Caco-2 (cell line): ENCODE measurements at regions of chr2 and their contacts with region 1.

Region 1: GRCh38 chr2:200713003-200713703 is 98.6 kb upstream of the BZW1 start:
- DNase-seq: peak; percentile 88 to 92
- H3K4me3 ChIP-seq: peak overlapping the region; percentile 18
- H3K4me3 Mint-ChIP-seq: peak overlapping the region; percentile 70
- H3K27ac Mint-ChIP-seq: peak overlapping the region; percentile 95
- H3K4me1 ChIP-seq: peaks cover 8% of the 10 kb centered on the region; the same call in 1 of the 2 replicates
- H3K4me1 Mint-ChIP-seq: no peaks in the 10 kb centered on the region
- H3K27me3 ChIP-seq: no peaks in the 10 kb centered on the region
- H3K27me3 Mint-ChIP-seq: no peaks in the 10 kb centered on the region
- CTCF ChIP-seq: peak; percentile 84 to 86

Region 2: GRCh38 chr2:200747668-200748618 is 34.8 kb after region 1 on chr2:
- CTCF ChIA-PET with region 1: interaction called, 7 read pairs
- POLR2A ChIA-PET with region 1: interaction called, 9 read pairs
- intact Hi-C with region 1: loop called (anchors 5 kb)
- DNase-seq: peak; percentile 77 to 87
- H3K4me3 ChIP-seq: no peak overlapping the region
- H3K4me3 Mint-ChIP-seq: peak overlapping the region; percentile 63
- H3K27ac Mint-ChIP-seq: peak overlapping the region; percentile 90
- H3K4me1 ChIP-seq: peaks cover 50% of the 10 kb centered on the region
- H3K4me1 Mint-ChIP-seq: peaks cover 32% of the 10 kb centered on the region
- H3K27me3 ChIP-seq: no peaks in the 10 kb centered on the region
- H3K27me3 Mint-ChIP-seq: no peaks in the 10 kb centered on the region
- CTCF ChIP-seq: no peak

Region 3: GRCh38 chr2:200795044-200795443 is 81.9 kb after region 1 on chr2:
- CTCF ChIA-PET with region 1: interaction called, 8 read pairs
- POLR2A ChIA-PET with region 1: no interaction called
- intact Hi-C with region 1: loop called (anchors 1 kb)
- DNase-seq: peak; percentile 52 to 57
- H3K4me3 ChIP-seq: no peak overlapping the region
- H3K4me3 Mint-ChIP-seq: no peak overlapping the region
- H3K27ac Mint-ChIP-seq: no peak overlapping the region
- H3K4me1 ChIP-seq: 0 out of 2 replicates have a peak, but pooled peaks cover 6% of the 10 kb centered on the region
- H3K4me1 Mint-ChIP-seq: peaks cover 21% of the 10 kb centered on the region
- H3K27me3 ChIP-seq: no peaks in the 10 kb centered on the region
- H3K27me3 Mint-ChIP-seq: no peaks in the 10 kb centered on the region
- CTCF ChIP-seq: peak in 1 of 2 experiments; percentile 50

Region 4: DNA sequence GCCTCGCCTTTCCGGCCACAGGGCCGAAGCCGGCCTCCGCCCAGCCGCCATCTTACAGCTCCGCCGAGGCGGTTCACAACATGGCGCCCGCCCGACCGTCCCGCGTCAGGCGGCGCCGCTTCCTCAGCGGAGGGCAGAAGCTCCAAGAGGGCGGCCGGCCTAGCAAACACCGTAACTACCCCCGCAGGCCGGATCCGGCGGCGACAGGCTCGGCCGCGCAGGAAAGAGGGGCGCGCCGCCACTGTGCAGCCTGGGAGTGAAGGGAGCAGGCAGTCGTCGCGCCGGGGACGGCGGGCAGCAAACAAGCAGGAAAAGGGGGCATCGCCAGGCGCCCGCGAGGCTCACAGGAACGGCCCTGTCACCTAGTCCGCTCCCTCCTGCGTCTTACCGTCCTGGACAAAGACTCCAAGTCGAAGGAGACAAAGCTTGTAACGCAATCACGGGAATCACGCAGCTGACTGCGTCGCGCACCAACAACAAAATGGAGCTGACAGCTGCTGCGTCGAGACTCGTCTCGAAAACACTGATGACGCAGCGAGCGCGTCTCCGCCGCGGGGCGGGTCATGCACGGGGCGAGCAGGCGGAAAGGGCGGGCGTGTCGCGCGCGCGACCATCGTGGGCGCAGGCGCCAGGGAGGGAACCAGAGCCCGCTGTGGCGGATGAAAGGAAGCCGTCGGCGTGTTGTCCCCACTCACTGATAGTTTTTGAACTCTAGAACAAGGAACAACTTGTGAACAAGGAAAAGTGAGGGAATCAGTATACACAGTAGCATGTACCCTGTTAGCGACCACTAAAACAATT is 151.2 kb after region 1 on chr2 and contains the start of gene CLK1:
- CTCF ChIA-PET with region 1: interaction called, 3 read pairs
- POLR2A ChIA-PET with region 1: interaction called, 3 read pairs
- intact Hi-C with region 1: loop called (anchors 2 kb)
- DNase-seq: peak; percentile 94
- H3K4me3 ChIP-seq: peak within 1 kb of the TSS; percentile 96
- H3K4me3 Mint-ChIP-seq: peak within 1 kb of the TSS; percentile 84
- H3K27ac Mint-ChIP-seq: peak within 1 kb of the TSS; percentile 96
- H3K4me1 ChIP-seq: peaks cover 14% of the 10 kb centered on the region
- H3K4me1 Mint-ChIP-seq: peaks cover 25% of the 10 kb centered on the region
- H3K27me3 ChIP-seq: no peaks in the 10 kb centered on the region
- H3K27me3 Mint-ChIP-seq: no peaks in the 10 kb centered on the region
- CTCF ChIP-seq: no peak
- total RNA-seq, gene CLK1: 62.6 and 68.0 TPM in 2 replicates